ENCODE measurements at regions of chr1 and their contacts with region 1.

Region 1: GRCh38 chr1:67133177-67133576 is 1.6 kb downstream of the C1orf141 start:
- DNase-seq: no peak
- H3K4me3 ChIP-seq: no peak overlapping the region
- H3K27ac ChIP-seq: no peak overlapping the region
- H3K4me1 ChIP-seq: peaks cover 6 to 38% (median 15%) of the 10 kb centered on the region in 4 donors
- H3K27me3 ChIP-seq: no peaks in the 10 kb centered on the region
- CTCF ChIP-seq: no peak
- EP300 ChIP-seq: no peak
- POLR2A ChIP-seq: no peak

Region 2: GRCh38 chr1:67110352-67110751 is 22.8 kb before region 1 on chr1:
- in situ Hi-C with region 1: no loop called
- intact Hi-C with region 1: loop called (anchors 1 kb)
- DNase-seq: no peak
- H3K4me3 ChIP-seq: no peak overlapping the region
- H3K27ac ChIP-seq: no peak overlapping the region
- H3K4me1 ChIP-seq: peaks cover 0 to 10% (median 4%) of the 10 kb centered on the region in 4 donors
- H3K27me3 ChIP-seq: no peaks in the 10 kb centered on the region
- CTCF ChIP-seq: no peak
- EP300 ChIP-seq: no peak
- POLR2A ChIP-seq: no peak

Measured in transverse colon (tissue), 4 donors.